Lower leg skin (tissue), 4 donors: ENCODE measurements at regions of chr3 and their contacts with region 1.

Region 1: GRCh38 chr3:194472290-194472920 is 14.4 kb downstream of the ATP13A3 start:
- DNase-seq: no peak
- H3K4me3 ChIP-seq: no peak overlapping the region
- CTCF ChIP-seq: peak in 1 of 3 donors; percentile 95
- POLR2A ChIP-seq: no peak

Region 2: DNA sequence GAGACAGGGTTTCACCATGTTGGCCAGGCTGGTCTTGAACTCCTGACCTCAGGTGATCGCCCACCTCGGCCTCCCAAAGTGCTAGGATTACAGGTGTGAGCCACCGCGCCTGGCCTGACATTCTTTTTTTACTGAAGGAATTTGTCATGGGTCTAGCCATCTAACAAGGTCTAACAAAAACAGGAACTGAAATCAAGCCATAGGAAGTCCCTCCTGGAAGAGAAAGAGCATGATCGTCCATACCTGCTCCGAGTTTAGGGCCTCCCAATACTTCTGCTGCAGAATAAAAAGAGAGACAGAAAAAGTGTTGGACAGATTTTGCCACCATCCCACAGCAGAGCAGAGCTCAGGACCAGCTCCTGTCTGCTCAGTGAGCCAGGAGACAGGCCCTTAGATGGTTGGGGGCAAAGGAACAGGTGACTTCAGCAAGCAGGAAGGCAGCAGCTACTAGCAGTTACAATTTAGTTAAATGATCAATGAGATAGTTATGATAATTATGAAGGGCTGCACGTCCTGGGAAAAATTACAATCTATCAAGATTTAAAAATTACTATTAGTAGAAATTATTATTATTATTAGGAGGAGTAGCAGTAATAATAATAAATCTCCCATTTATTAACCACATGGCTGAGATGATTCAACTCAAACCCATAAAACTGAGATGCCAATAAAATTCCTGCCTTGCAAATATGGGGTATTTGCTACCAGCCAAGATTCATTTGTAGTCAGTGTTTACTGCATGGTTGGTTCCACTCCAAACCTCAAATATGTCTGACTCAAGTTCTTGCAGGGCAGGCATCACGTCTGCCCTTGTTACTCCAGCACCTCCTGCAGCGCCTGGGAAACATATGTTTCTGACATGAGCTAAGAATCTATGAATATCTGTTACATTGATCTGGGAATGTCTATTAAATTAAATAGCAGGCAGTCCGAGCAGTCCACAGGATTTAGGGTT is 120.7 kb after region 1 on chr3:
- intact Hi-C with region 1: loop called (anchors 5 kb)
- DNase-seq: peak in 1 of 2 donors; percentile 77
- H3K4me3 ChIP-seq: no peak overlapping the region
- CTCF ChIP-seq: no peak
- POLR2A ChIP-seq: no peak